ENCODE measurements at regions of chr13 and their contacts with region 1.

Region 1: GRCh38 chr13:110233181-110233950 is 73.6 kb downstream of the COL4A1 start:
- DNase-seq: peak; percentile 58
- ATAC-seq: peak; percentile 60

Region 2: GRCh38 chr13:109646423-109646822 is 586.9 kb before region 1 on chr13:
- intact Hi-C with region 1: no loop called
- DNase-seq: no peak
- ATAC-seq: no peak

Region 3: DNA sequence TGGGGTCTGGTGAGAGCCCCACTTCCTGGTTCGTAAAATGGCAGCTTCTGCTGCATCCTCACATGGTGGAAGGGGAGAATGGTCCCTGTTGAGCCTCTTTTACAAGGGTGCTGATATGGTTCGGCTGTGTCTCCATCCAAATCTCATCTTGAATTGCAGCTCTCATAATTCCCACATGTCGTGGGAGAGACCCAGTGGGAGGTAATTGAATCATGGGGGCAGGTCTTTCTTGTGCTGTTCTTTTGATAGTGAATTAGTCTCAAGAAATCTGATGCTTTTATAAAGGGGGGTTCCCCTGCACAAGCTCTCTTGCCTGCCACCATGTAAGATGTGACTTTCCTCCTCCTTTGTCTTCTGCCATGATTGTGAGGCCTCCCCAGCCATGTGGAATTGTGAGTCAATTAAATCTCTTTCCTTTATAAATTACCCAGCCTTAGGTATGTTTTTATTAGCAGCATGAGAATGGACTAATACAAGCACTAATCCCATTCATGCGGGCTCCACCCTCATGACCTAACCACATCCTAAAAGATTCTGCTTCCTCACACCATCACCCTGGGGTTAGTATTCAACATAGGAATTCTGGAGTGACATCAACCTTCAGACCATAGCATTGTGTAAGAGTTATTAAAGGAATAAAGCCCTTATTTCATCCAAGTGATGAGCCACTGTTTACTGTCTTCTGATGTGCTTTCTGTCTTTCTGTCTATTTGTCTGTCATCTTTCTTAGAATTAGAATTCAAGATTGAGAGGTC is 288.0 kb before region 1 on chr13:
- intact Hi-C with region 1: no loop called
- DNase-seq: no peak
- ATAC-seq: no peak

Region 4: GRCh38 chr13:110306960-110307746 is 73.8 kb after region 1 on chr13 and contains the starts of genes COL4A1 and COL4A2:
- intact Hi-C with region 1: loop called (anchors 10 kb)
- DNase-seq: peak; percentile 93
- ATAC-seq: peak; percentile 85
- total RNA-seq, gene COL4A1: 119 TPM
- total RNA-seq, gene COL4A2: 126 TPM

Region 5: GRCh38 chr13:110412132-110412914 is 179.0 kb after region 1 on chr13:
- intact Hi-C with region 1: loop called (anchors 10 kb)
- DNase-seq: peak; percentile 88
- ATAC-seq: peak; percentile 78